ENCODE measurements at regions of chr3 and their contacts with region 1.

Region 1: DNA sequence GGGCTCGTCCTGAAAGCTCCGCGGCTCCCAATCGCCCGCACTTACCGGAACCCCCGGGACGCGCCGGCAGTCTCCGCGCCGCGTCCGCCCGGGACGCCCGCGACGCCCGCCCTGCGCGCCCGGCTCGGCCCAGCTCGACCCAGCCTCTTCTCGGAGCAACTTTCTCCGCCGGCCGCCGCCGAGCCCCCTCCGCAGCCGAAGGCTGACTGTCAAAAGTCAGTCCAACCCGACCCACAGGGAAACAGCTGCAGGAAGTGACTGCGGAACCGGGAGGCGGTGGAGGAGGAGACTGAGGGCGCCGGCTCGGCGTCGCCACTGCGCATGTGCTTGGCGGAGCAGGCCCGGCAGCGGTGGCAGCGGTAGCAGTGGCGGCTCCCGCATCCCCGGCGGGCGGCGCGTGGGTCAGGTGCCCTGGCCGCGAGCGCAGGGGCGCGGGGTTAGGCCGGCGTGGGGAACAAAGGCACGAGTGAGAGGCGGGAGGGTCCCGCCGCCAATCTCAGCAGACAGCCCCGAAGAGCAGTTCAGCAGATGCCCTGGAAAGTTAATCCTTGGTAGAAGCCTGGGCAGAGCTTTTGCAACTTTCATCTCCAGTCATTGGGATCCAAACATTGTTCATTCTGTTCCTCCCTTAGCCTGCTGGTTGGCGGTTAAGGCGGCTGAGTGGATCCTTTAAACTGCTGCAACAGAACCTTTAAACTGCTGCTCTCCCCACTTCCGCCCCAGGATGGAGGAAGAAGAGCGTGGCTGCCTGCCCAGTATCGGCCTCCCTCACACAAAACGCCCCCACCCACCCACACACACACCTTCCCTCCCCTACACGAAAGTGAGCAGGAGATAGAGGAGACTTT is at the start of gene ZMAT3:
- DNase-seq: peak; percentile 80
- H3K4me3 ChIP-seq: peak within 1 kb of the TSS; percentile 54 to 75 (median 74)
- H3K27ac ChIP-seq: peak within 1 kb of the TSS; percentile 94
- H3K4me1 ChIP-seq: peaks cover 22% of the 10 kb centered on the region
- H3K27me3 ChIP-seq: no peaks in the 10 kb centered on the region
- CTCF ChIP-seq: no peak
- total RNA-seq, gene ZMAT3: 31.3 to 56.2 TPM

Region 2: DNA sequence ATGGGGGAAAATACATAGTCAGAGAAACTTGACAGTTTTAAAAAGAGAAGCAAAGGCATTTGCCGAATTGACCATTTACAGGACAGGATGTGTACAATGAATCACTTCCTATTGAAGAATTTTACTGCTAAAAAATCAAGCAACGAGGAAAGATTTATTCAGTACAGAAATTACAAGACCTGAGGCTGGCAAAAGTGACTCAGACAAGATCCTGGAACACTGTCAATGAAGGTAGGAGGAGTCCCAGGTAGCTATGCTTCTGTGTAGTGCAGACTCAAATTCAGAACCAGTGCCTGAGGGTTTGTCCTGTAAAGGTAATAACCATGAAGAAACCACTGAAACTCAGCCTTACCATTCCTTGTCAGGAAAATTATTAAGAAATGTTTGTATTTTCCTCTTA is 121.1 kb before region 1 on chr3:
- CTCF ChIA-PET with region 1: no interaction called
- dilution Hi-C with region 1: no loop called
- in situ Hi-C with region 1: no loop called
- intact Hi-C with region 1: no loop called
- DNase-seq: peak; percentile 85
- H3K4me3 ChIP-seq: no peak overlapping the region
- H3K27ac ChIP-seq: no peak overlapping the region
- H3K4me1 ChIP-seq: peaks cover 15% of the 10 kb centered on the region
- H3K27me3 ChIP-seq: no peaks in the 10 kb centered on the region
- CTCF ChIP-seq: no peak

Region 3: GRCh38 chr3:178986456-178986855 is 85.3 kb before region 1 on chr3:
- CTCF ChIA-PET with region 1: no interaction called
- dilution Hi-C with region 1: no loop called
- in situ Hi-C with region 1: no loop called
- intact Hi-C with region 1: no loop called
- DNase-seq: no peak
- H3K4me3 ChIP-seq: no peak overlapping the region
- H3K27ac ChIP-seq: no peak overlapping the region
- H3K4me1 ChIP-seq: no peaks in the 10 kb centered on the region
- H3K27me3 ChIP-seq: no peaks in the 10 kb centered on the region
- CTCF ChIP-seq: no peak

Region 4: DNA sequence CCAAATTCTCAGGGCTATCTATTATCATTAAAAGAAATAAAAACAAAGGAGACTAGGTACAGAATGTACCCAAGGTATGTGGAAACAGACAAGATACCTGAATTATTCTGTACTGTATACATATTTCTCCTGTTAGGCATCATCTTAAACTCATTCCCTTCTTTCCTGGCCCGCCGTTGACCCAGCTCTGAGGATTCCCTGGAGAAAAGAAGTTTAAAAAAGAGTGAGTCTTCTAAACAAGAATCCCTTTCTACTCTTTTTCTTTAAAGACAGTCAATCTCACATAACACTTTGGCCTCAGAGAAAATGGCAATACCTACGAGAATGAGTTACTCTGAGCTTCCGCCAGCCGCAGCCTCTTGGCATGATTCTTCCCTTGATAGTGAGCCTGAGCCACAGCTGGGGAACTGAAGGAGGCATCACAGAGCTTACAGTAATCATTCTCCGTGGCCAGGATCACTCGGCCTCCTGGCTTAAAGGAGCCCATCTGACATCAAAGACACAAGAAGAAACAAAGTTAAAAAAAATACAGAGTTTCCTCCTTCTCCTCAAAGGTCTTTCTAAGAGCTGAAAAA is 44.4 kb before region 1 on chr3:
- CTCF ChIA-PET with region 1: no interaction called
- dilution Hi-C with region 1: no loop called
- in situ Hi-C with region 1: no loop called
- intact Hi-C with region 1: loop called (anchors 1 kb)
- DNase-seq: peak; percentile 76
- H3K4me3 ChIP-seq: peak overlapping the region in 1 of 3 experiments; percentile 9
- H3K27ac ChIP-seq: peak overlapping the region; percentile 80
- H3K4me1 ChIP-seq: peaks cover 19% of the 10 kb centered on the region
- H3K27me3 ChIP-seq: no peaks in the 10 kb centered on the region
- CTCF ChIP-seq: peak in 1 of 2 donors; percentile 31

Region 5: GRCh38 chr3:179037351-179037750 is 34.4 kb before region 1 on chr3:
- CTCF ChIA-PET with region 1: interaction called, 3 read pairs
- dilution Hi-C with region 1: loop called (anchors 5 kb)
- in situ Hi-C with region 1: no loop called
- intact Hi-C with region 1: loop called (anchors 1 kb)
- DNase-seq: peak; percentile 94
- H3K4me3 ChIP-seq: peak overlapping the region in 2 of 3 experiments; percentile 21 to 33
- H3K27ac ChIP-seq: peak overlapping the region; percentile 69
- H3K4me1 ChIP-seq: peaks cover 36% of the 10 kb centered on the region
- H3K27me3 ChIP-seq: no peaks in the 10 kb centered on the region
- CTCF ChIP-seq: no peak

Region 6: DNA sequence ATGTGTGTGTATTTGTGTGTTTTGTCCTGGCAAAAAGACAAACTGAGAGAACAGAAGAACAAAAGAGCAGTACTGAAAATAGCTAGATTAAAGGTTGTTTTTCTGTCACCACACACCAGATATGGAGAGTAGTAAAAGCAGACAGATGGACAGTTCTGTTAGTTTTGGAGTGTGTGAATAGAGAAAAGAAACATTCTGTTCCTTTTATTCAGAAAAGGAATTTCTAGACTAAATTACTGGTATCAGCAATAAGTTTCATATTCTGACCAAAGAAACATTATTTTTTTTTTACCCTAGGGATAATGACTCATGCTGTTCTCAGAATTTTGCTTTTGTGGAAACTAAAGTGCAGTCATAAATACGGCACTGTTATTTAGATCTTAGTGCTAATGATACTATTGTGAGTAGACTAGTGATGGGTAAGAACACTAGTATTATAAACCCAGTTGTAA is 109.3 kb after region 1 on chr3:
- CTCF ChIA-PET with region 1: no interaction called
- dilution Hi-C with region 1: no loop called
- in situ Hi-C with region 1: no loop called
- intact Hi-C with region 1: no loop called
- DNase-seq: peak; percentile 65
- H3K4me3 ChIP-seq: no peak overlapping the region
- H3K27ac ChIP-seq: no peak overlapping the region
- H3K4me1 ChIP-seq: peaks cover 5% of the 10 kb centered on the region
- H3K27me3 ChIP-seq: no peaks in the 10 kb centered on the region
- CTCF ChIP-seq: no peak

Region 7: GRCh38 chr3:179258820-179259219 is 187.0 kb after region 1 on chr3:
- CTCF ChIA-PET with region 1: no interaction called
- dilution Hi-C with region 1: no loop called
- in situ Hi-C with region 1: no loop called
- intact Hi-C with region 1: no loop called
- DNase-seq: no peak
- H3K4me3 ChIP-seq: no peak overlapping the region
- H3K27ac ChIP-seq: no peak overlapping the region
- H3K4me1 ChIP-seq: no peaks in the 10 kb centered on the region
- H3K27me3 ChIP-seq: no peaks in the 10 kb centered on the region
- CTCF ChIP-seq: no peak

Measured in mammary epithelial cell (primary cell).